Dendritic cell treated with granulocyte-macrophage colony-stimulating factor and Interleukin-4, amounts not matched to agents 40 ng/mL and 50 ng/mL, for 4 days (primary cell): ENCODE measurements at regions of chr20 and their contacts with region 1.

Region 1: GRCh38 chr20:63537525-63538203 is 488 bp upstream of the PTK6 start:
- H3K4me3 Mint-ChIP-seq: peak overlapping the region; percentile 83
- H3K27ac Mint-ChIP-seq: peak overlapping the region; percentile 94
- H3K4me1 Mint-ChIP-seq: peaks cover 27% of the 10 kb centered on the region
- H3K27me3 Mint-ChIP-seq: peaks cover 40% of the 10 kb centered on the region

Region 2: GRCh38 chr20:63457737-63458136 is 79.9 kb before region 1 on chr20:
- intact Hi-C with region 1: no loop called
- H3K4me3 Mint-ChIP-seq: no peak overlapping the region
- H3K27ac Mint-ChIP-seq: no peak overlapping the region
- H3K4me1 Mint-ChIP-seq: peaks cover 4% of the 10 kb centered on the region
- H3K27me3 Mint-ChIP-seq: peaks cover 47% of the 10 kb centered on the region

Region 3: DNA sequence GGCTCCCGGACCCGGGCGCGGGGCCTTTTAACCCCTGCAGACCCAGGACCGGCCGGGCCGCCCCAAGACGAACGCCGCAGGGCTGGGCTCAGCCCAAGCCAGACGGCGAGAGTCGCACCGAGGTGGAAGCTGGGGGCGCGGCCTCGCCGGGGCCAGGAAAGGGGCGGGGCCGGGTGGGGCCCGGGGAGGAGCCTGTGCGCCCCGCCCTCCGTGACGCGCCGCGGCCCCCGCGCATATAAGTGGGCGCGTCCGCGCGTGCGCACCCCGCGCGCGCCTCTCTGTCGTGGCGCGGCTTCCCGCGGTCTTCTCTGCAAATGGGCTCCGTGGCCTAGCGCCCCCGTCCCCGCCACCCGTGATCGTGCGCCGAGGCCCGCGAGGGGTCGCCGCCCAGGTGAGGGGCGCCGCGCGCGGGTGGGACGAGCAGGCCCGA is 17.1 kb before region 1 on chr20 and contains the start of gene PPDPF:
- intact Hi-C with region 1: loop called (anchors 2 kb)
- H3K4me3 Mint-ChIP-seq: peak within 1 kb of the TSS; percentile 81
- H3K27ac Mint-ChIP-seq: peak within 1 kb of the TSS; percentile 85
- H3K4me1 Mint-ChIP-seq: peaks cover 32% of the 10 kb centered on the region
- H3K27me3 Mint-ChIP-seq: peaks cover 39% of the 10 kb centered on the region

Region 4: GRCh38 chr20:63627129-63627750 is 89.6 kb after region 1 on chr20:
- intact Hi-C with region 1: loop called (anchors 5 kb)
- H3K4me3 Mint-ChIP-seq: peak overlapping the region; percentile 98
- H3K27ac Mint-ChIP-seq: peak overlapping the region; percentile 88
- H3K4me1 Mint-ChIP-seq: peaks cover 52% of the 10 kb centered on the region
- H3K27me3 Mint-ChIP-seq: no peaks in the 10 kb centered on the region

Region 5: GRCh38 chr20:63686492-63687321 is 149.0 kb after region 1 on chr20:
- intact Hi-C with region 1: loop called (anchors 2 kb)
- H3K4me3 Mint-ChIP-seq: peak overlapping the region; percentile 58
- H3K27ac Mint-ChIP-seq: peak overlapping the region; percentile 100
- H3K4me1 Mint-ChIP-seq: peaks cover 83% of the 10 kb centered on the region
- H3K27me3 Mint-ChIP-seq: no peaks in the 10 kb centered on the region

Region 6: DNA sequence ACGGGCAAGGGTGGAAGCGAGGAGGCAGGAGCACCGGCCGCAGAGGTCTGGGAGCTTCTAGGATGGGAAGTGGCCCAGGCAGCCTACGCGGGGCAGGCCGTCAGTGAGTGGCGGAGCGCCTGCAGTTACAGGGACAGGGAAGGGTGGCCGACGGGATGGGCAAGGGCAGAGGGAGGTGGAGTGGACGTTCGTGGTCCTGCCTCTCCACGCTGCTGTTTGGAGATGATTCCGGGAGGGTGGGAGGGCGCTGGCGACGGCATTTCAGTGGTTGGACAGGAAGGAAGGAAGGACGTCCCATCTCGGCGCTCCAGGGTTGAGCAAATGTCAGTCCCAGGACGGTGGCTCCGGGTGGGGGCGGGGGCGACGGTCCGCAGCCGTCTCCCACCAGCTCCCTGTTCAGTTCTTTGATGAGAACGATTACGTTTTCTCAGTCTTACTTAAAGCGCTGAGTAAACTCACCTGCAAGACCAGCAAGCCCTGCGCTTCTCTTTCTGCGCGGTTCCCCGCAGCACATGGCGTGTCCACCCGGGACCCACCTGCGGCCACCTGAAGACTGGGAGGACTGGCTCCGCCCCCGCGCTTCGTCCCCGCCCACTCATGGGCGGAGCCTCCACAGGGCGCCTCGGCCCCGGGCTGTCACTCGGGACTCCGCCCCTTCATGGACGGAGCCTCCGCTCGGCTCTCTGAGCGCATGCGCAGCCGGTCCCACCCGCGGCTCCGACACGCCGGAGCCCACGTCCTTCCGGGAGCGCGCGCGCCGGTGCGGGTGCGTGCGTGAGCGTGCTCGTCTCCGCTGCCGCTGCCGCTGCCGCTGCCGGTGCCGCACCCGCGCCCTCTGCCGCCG is 356.9 kb after region 1 on chr20 and contains the start of gene DNAJC5:
- intact Hi-C with region 1: loop called (anchors 5 kb)
- H3K4me3 Mint-ChIP-seq: peak within 1 kb of the TSS; percentile 79
- H3K27ac Mint-ChIP-seq: peak within 1 kb of the TSS; percentile 93
- H3K4me1 Mint-ChIP-seq: peaks cover 58% of the 10 kb centered on the region
- H3K27me3 Mint-ChIP-seq: no peaks in the 10 kb centered on the region

Region 7: DNA sequence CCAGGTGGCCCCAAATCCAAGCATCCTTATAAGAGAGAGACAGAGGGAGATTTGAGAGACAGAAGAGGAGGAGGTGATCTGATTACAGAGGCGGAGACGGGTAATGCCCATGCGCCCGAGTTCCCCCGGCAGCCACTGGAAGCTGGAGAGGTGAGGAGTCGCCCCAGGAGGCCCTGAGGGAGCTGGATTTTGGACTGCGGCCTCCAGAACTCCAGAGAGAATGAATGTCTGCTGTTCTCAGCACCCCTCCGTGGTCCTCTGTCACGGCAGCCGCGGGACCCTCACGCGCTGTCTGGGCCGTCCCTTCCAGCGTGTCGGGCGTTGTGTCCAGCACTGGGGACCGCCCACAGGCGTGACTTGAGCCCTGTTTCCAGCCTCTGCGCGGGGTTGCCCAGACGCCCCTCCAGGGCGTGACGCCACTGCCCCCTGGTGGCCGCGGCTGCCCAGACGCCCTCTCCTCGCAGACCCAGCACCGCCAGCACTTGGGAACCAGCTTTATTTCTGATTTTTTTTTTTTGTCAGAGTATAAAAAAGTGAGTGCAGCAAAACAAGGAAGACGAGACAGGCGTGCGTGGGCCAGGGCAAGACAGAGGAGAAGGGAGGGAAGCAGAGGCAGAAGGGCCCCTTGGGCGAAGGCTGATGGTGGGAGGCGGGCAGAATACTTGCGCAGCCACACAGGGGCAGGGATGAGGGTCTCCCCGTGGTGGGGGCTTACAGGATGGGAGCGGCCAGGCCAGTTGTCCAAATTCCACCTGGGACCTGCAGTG is 436.2 kb after region 1 on chr20:
- intact Hi-C with region 1: loop called (anchors 5 kb)
- H3K4me3 Mint-ChIP-seq: no peak overlapping the region
- H3K27ac Mint-ChIP-seq: peak overlapping the region; percentile 38
- H3K4me1 Mint-ChIP-seq: peaks cover 43% of the 10 kb centered on the region
- H3K27me3 Mint-ChIP-seq: peaks cover 30% of the 10 kb centered on the region

Region 8: GRCh38 chr20:64161356-64162238 is 623.9 kb after region 1 on chr20:
- intact Hi-C with region 1: no loop called
- H3K4me3 Mint-ChIP-seq: no peak overlapping the region
- H3K27ac Mint-ChIP-seq: no peak overlapping the region
- H3K4me1 Mint-ChIP-seq: peaks cover 4% of the 10 kb centered on the region
- H3K27me3 Mint-ChIP-seq: peaks cover 35% of the 10 kb centered on the region